ENCODE measurements at regions of chr10 and their contacts with region 1.

Region 1: DNA sequence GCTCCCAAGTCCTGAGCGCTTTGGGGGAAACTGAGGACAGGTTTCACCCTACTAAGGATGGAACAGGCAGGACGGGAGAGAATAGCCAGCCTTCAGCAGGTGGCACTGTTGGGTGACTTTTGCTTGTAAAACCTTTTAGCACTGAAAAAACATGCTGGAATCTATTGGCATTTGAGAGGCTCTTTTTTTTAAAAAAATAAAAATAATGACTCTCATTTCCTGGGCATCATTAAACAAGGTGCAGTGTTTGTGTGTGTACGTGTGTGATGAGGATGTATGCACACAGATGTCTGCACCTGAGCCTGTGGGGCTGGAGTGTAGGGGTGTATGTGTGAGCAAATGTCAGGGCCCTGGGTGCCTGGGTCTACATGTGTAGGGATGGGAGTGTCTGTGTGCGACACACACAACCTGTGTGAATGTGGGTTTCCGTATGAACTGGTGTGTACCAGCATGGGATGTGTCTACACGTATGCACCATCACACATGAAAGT is 177.9 kb downstream of the RPS24 start:
- DNase-seq: peak; percentile 25
- H3K4me3 ChIP-seq: no peak overlapping the region
- H3K27ac ChIP-seq: no peak overlapping the region
- H3K4me1 ChIP-seq: no peaks in the 10 kb centered on the region
- H3K27me3 ChIP-seq: no peaks in the 10 kb centered on the region
- CTCF ChIP-seq: peak; percentile 18 to 64 (median 48)
- POLR2A ChIP-seq: no peak

Region 2: DNA sequence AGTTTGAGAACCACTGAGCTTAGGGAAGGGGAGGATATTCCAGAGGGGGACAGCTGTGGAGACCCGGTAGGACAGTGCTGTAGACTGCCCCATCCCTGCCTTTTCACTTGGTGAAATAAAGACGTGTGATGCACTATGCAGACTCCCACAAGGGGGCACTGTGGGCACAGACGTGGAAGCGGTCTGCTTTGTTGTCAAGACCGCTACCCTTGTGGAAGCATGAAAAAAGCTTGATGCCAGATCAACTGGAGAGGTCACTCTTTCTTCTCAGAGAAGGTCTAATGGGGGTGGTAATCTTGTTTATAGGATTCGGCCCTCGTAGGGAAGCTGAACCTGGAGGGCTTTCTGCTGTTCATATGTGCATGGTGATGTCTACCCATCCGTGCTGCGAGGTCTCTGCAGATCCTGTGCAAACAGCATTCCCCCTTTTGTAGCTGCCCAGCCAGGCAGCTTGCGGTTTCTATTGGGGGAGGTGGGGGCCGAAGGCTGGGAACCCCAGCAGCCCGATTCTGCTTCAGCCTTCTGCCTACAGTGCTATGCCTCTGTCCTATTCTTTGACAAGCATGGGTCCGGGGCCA is 164.2 kb before region 1 on chr10:
- intact Hi-C with region 1: loop called (anchors 5 kb)
- DNase-seq: peak; percentile 85
- H3K4me3 ChIP-seq: no peak overlapping the region
- H3K27ac ChIP-seq: no peak overlapping the region
- H3K4me1 ChIP-seq: no peaks in the 10 kb centered on the region
- H3K27me3 ChIP-seq: no peaks in the 10 kb centered on the region
- CTCF ChIP-seq: peak; percentile 84 to 90 (median 87)
- POLR2A ChIP-seq: no peak

Region 3: DNA sequence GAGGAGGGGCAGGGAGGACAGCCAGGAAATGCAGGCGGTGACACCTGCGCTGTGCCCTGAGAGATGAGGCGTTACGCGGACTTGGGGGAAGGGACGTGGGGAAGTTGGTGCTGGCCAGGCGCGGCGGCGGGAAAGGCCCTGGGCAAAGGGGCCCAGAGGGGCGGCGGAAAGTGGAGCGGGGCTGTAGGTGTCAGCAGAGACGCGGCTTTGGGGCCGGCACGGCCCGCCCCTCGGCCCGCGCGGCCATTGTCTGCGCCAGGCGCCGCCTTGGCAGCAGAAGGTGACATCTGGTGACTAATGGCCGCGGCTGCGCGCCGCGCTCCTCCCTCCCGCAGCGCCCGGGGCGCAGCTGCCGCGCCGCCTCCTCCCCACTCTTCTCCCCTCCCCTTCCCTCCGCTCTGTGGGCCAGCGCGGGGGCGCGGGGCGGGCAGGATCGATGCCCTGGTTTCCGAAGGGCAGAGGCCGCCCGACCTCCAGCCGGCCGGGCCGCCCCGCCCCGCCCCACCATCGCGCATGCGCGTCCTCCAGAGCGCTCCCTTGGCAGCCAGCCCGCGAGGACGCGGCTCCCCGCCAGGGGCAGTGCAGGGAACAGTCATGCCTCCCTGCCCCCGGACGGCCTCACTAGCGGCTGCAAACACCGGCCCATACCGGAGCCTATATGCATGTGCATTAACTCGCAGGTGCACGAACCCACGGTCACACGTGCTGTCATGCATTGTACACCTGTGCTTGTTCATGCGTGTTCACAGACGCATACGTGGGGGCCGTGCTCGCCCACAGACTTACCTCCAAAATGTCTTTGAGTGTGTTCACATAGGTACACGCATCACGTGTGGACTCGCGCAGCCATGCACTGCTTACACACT is 91.6 kb after region 1 on chr10:
- intact Hi-C with region 1: loop called (anchors 2 kb)
- DNase-seq: peak; percentile 90
- H3K4me3 ChIP-seq: peak overlapping the region; percentile 48 to 54
- H3K27ac ChIP-seq: peak overlapping the region; percentile 84 to 87
- H3K4me1 ChIP-seq: peaks cover 4% of the 10 kb centered on the region
- H3K27me3 ChIP-seq: no peaks in the 10 kb centered on the region
- CTCF ChIP-seq: peak; percentile 54 to 91 (median 77)
- POLR2A ChIP-seq: peak; percentile 71

Region 4: DNA sequence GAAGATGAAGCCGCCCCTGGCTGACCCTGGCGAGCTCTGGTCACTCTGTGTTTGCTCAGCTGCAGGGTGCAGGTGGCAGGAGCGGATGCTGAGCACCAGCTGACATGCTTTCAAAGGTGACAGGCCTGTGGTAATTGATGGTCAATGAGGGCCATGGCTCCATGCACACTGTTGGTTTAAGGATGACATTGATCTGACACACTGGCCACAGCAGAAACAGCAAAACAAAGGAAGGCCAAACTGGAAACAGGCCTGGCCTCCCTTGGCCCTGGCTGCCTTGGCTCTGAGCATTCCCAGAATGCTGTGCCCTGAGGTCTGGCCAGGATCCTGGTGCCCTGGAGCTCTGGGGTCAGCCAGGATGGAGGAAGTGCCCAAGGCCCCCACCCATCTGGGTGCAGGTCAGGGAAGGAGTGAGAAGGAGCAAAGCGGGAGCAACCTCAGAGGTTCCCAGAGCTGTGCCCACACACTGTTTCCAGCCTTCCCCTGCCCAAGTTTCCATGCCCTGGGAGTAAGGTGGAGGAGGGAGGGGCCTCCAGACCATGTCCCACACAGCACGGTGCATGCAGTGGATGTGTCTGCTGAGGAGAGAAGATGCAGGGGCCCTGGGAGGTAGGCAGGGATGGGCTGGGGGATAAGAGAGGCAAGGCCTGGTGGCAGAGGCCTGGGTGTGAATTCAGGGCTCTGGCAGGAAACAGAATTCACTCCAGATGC is 124.2 kb after region 1 on chr10:
- intact Hi-C with region 1: no loop called
- DNase-seq: peak; percentile 3
- H3K4me3 ChIP-seq: no peak overlapping the region
- H3K27ac ChIP-seq: no peak overlapping the region
- H3K4me1 ChIP-seq: no peaks in the 10 kb centered on the region
- H3K27me3 ChIP-seq: no peaks in the 10 kb centered on the region
- CTCF ChIP-seq: no peak
- POLR2A ChIP-seq: no peak

Region 5: GRCh38 chr10:78510566-78511323 is 299.1 kb after region 1 on chr10:
- intact Hi-C with region 1: loop called (anchors 10 kb)
- DNase-seq: no peak
- H3K4me3 ChIP-seq: no peak overlapping the region
- H3K27ac ChIP-seq: peak overlapping the region; percentile 13 to 14
- H3K4me1 ChIP-seq: no peaks in the 10 kb centered on the region
- H3K27me3 ChIP-seq: no peaks in the 10 kb centered on the region
- CTCF ChIP-seq: no peak
- POLR2A ChIP-seq: no peak

Measured in prostate gland (tissue), 2 donors.